Dorsolateral prefrontal cortex (tissue), 120 donors: ENCODE measurements at regions of chr2 and their contacts with region 1.

Region 1: GRCh38 chr2:63861220-63861822 is 19.6 kb downstream of the UGP2 start:
- DNase-seq: peak in 2 of 10 donors; percentile 47 to 56
- H3K4me3 ChIP-seq: no peak overlapping the region
- H3K27ac ChIP-seq: peak overlapping the region in 9 of 59 donors; percentile 3 to 44 (median 14)
- H3K27me3 ChIP-seq: no peaks in the 10 kb centered on the region
- CTCF ChIP-seq: peak; percentile 41 to 80 (median 64)

Region 2: DNA sequence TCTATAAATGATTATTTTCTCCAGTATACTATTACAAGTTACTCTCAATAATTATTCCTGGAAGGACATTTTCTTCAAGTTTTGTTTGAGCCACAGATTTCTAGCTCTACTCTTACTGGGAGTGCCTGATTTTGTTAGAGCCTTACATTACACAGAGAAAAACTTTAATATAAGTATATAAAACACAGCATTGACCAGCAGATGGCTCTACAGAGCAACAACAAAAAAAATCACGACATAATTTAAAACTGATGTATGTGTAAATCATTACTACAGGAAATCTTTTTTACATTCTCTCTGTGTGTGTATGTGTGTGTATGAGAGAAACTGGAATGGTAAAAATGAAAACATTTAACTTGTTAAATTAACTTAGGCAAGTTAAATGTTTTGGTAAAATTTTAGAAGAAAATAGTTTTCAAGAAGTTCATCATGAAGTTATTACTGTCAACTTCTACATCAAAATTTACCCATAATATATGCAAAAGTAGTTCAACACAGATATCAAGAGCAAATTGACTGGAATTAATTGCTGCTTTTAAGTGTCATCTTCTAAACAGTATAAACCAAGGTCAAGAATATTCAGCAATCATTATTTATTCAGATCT is 169.2 kb before region 1 on chr2:
- intact Hi-C with region 1: loop called (anchors 5 kb)
- DNase-seq: no peak
- H3K4me3 ChIP-seq: no peak overlapping the region
- H3K27ac ChIP-seq: no peak overlapping the region
- H3K27me3 ChIP-seq: no peaks in the 10 kb centered on the region
- CTCF ChIP-seq: peak; percentile 40 to 83 (median 68)